CD8-positive, alpha-beta memory T cell (primary cell): ENCODE measurements at regions of chr2 and their contacts with region 1.

Region 1: DNA sequence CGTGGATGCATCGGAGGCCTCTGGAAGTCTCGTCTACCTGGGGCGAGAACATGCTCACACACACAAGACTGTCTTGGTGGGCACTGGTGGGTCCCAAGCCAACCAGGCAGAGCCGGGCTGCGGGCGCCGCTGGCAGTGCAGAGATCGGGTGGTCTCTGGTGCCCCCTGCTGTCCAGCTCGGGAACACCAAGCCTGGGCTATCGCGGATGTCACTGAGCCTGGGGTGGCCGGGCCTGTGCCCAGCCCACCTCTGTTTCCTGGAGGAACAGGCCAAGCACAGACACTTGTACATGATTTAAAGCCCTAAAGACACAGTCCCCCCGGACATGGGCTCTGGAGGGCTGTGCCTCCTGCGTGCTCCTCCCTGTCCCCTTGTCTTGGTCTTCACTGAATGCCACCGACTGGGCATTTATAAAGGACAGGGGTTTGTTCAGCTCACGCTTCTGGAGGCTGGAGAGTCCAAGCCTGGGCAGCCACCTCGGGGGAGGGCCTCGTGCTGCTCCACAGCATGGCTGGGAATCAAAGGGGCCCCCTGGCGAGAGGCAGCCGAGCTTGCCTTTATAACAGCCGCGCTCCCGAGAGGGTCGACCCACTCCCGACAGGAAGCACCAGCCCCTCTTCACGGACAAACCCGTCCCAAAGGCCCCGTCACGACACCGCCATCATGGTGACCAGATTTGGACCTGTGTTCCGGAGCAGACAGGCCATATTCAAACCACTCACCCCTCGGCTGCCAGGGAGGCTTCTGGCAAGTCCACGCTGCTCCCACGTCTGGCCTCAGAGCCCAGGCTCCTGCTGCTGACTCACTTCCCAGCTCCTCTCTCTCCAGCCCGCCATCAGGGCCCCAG is 3.6 kb upstream of the OTOS start:
- DNase-seq: peak; percentile 69 to 82 (median 73)
- H3K4me3 ChIP-seq: no peak overlapping the region
- H3K4me3 Mint-ChIP-seq: no peak overlapping the region
- H3K27ac ChIP-seq: no peak overlapping the region
- H3K27ac Mint-ChIP-seq: no peak overlapping the region
- H3K4me1 ChIP-seq: peaks cover 5% of the 10 kb centered on the region
- H3K4me1 Mint-ChIP-seq: no peaks in the 10 kb centered on the region
- H3K27me3 ChIP-seq: no peaks in the 10 kb centered on the region
- H3K27me3 Mint-ChIP-seq: peaks cover 0 to 7% of the 10 kb centered on the region in 2 donors

Region 2: GRCh38 chr2:240051697-240052096 is 92.3 kb before region 1 on chr2:
- CTCF ChIA-PET with region 1: interaction called, 10 read pairs
- POLR2A ChIA-PET with region 1: no interaction called
- DNase-seq: no peak
- H3K4me3 ChIP-seq: no peak overlapping the region
- H3K4me3 Mint-ChIP-seq: no peak overlapping the region
- H3K27ac ChIP-seq: no peak overlapping the region
- H3K27ac Mint-ChIP-seq: no peak overlapping the region
- H3K4me1 ChIP-seq: no peaks in the 10 kb centered on the region
- H3K4me1 Mint-ChIP-seq: no peaks in the 10 kb centered on the region
- H3K27me3 ChIP-seq: no peaks in the 10 kb centered on the region
- H3K27me3 Mint-ChIP-seq: peaks cover 37 to 58% of the 10 kb centered on the region in 2 donors

Region 3: GRCh38 chr2:240060977-240061591 is 82.9 kb before region 1 on chr2:
- CTCF ChIA-PET with region 1: interaction called, 96 read pairs
- POLR2A ChIA-PET with region 1: no interaction called
- DNase-seq: peak in 4 of 5 donors; percentile 12 to 41 (median 24)
- H3K4me3 ChIP-seq: no peak overlapping the region
- H3K4me3 Mint-ChIP-seq: no peak overlapping the region
- H3K27ac ChIP-seq: no peak overlapping the region
- H3K27ac Mint-ChIP-seq: no peak overlapping the region
- H3K4me1 ChIP-seq: no peaks in the 10 kb centered on the region
- H3K4me1 Mint-ChIP-seq: no peaks in the 10 kb centered on the region
- H3K27me3 ChIP-seq: no peaks in the 10 kb centered on the region
- H3K27me3 Mint-ChIP-seq: peaks cover 12 to 33% of the 10 kb centered on the region in 2 donors